ENCODE measurements at regions of chr10 and their contacts with region 1.

Region 1: DNA sequence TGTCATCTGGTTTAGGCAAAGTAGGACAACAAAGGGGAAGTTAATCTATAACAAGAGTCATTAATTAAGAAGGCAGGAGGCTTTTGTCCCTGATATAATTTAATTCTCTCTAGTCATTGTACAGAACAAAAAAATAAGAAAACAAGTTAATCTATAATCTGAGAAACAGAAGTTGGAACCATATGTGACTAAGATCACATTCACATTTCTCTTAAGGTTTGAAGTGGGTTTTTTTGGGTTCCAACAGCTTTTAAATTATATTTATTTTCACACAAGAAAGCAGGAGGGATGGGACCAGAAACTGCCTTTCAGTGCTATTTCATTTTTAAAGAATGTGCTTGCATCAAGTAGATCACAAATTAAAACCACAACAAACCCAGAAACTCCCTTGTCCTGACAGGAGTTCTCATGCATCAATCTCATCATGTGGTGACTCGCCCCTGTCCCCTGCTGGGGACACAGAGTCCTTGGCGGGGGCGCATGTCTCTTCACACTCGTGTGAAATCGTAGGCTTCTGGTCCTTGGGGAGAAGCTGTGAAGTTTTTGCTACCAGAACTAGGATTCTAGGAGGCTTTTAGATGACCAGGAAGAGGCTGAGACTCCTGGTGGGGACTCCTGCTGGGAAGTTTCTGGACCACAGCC is 10.1 kb upstream of the OPN4 start:
- DNase-seq: peak; percentile 29
- H3K4me3 ChIP-seq: no peak overlapping the region
- H3K27ac ChIP-seq: peak overlapping the region in 1 of 2 experiments; percentile 13; a peak in 1 of 4 replicates
- H3K4me1 ChIP-seq: peaks cover 6 to 30% of the 10 kb centered on the region in 2 experiments
- H3K27me3 ChIP-seq: no peaks in the 10 kb centered on the region
- CTCF ChIP-seq: peak; percentile 22
- EP300 ChIP-seq: no peak
- RAD21 ChIP-seq: no peak

Region 2: GRCh38 chr10:86661161-86662025 is 17.1 kb after region 1 on chr10:
- CTCF ChIA-PET with region 1: interaction called, 11 read pairs
- POLR2A ChIA-PET with region 1: no interaction called
- DNase-seq: peak; percentile 72
- H3K4me3 ChIP-seq: no peak overlapping the region
- H3K27ac ChIP-seq: no peak overlapping the region
- H3K4me1 ChIP-seq: peaks cover 0 to 35% of the 10 kb centered on the region in 2 experiments; a peak in 1 of 4 replicates
- H3K27me3 ChIP-seq: no peaks in the 10 kb centered on the region
- CTCF ChIP-seq: no peak
- EP300 ChIP-seq: no peak
- RAD21 ChIP-seq: peak; percentile 57

Region 3: GRCh38 chr10:86688398-86688921 is 44.2 kb after region 1 on chr10:
- CTCF ChIA-PET with region 1: interaction called, 36 read pairs
- POLR2A ChIA-PET with region 1: no interaction called
- DNase-seq: peak; percentile 82
- H3K4me3 ChIP-seq: no peak overlapping the region; a peak in 1 of 4 replicates
- H3K27ac ChIP-seq: no peak overlapping the region
- H3K4me1 ChIP-seq: peaks cover 0 to 8% of the 10 kb centered on the region in 2 experiments; a peak in 1 of 4 replicates
- H3K27me3 ChIP-seq: no peaks in the 10 kb centered on the region
- CTCF ChIP-seq: peak; percentile 82
- EP300 ChIP-seq: no peak
- RAD21 ChIP-seq: peak; percentile 88

Measured in SK-N-SH (cell line).